Dorsolateral prefrontal cortex (tissue), 120 donors: ENCODE measurements at regions of chr1 and their contacts with region 1.

Region 1: DNA sequence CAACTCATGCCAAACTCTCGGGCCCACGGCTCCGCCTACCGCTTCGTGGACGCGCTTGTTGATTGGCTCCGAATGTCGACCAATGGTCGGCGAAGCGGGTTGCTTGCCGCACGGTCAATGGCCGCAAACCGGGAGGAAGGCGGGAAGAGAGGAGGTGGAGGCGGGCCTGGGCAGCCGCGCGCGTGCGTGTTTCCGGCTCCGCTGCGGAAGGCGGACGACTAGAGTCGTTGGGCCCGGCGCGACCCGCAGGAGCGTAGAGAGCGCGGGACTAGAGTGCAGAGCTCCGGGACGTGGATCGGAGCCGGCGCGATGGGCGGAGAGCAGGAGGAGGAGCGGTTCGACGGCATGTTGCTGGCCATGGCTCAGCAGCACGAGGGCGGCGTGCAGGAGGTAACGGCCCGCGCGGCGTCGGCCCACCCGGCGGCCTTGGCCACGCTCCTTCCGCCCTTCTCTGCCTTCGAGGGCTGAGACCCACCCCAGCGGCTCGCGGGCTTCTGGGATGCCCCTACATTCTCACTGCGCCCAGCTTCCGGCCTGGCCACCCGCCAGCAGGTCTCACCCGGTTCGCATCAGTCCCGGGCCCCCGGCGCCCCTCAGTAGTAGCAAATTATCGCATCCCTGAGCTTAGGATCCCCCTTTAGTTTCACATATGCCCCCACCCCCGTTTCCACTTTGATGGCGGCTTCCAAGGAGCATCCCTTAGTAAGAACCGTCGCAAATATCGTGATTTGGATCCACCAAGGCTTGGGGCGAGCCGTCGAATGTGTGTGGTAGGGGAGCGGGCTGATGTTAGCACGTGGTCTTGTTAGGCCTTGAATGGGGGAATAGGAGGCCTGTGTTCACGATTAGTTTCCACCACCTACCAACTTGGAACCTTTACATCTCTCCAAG is at the start of gene NUDC:
- DNase-seq: peak; percentile 97 to 99 (median 98)
- H3K4me3 ChIP-seq: peak within 1 kb of the TSS; percentile 68 to 100 (median 98)
- H3K27ac ChIP-seq: peak within 1 kb of the TSS; percentile 76 to 100 (median 97)
- H3K27me3 ChIP-seq: no peaks in the 10 kb centered on the region
- CTCF ChIP-seq: peak in 19 of 56 donors; percentile 9 to 49 (median 27)
- total RNA-seq, gene NUDC: 61.0 to 142 (median 91.8) TPM

Region 2: DNA sequence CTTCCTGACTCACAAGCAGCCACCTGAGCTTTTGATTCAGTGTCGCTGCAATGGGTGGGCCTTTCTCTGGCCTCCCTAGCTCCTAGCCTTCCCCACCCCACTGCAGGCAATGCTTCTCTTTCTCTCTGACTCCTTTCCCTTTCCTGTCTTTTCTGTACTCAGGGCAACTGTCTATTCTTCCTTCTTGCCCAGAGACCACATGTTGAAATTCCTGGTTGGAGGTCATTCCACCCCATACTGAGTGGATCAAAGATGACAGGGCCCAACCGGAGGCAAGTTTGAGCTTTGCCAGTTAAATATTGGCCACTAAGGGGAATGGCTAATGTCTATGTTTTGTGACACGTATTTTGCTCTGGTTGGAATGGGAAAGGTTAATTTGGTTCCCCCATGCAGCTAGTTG is 291.2 kb before region 1 on chr1:
- intact Hi-C with region 1: no loop called
- DNase-seq: no peak
- H3K4me3 ChIP-seq: no peak overlapping the region
- H3K27ac ChIP-seq: no peak overlapping the region
- H3K27me3 ChIP-seq: no peaks in the 10 kb centered on the region
- CTCF ChIP-seq: no peak

Region 3: GRCh38 chr1:26864610-26865527 is 56.9 kb before region 1 on chr1:
- intact Hi-C with region 1: loop called in 1 of 2 experiments (anchors 1 kb)
- DNase-seq: peak; percentile 92 to 98 (median 96)
- H3K4me3 ChIP-seq: peak overlapping the region; percentile 48 to 93 (median 76)
- H3K27ac ChIP-seq: peak overlapping the region; percentile 9 to 99 (median 90)
- H3K27me3 ChIP-seq: no peaks in the 10 kb centered on the region
- CTCF ChIP-seq: peak in 42 of 56 donors; percentile 9 to 64 (median 37)

Region 4: GRCh38 chr1:26874896-26875295 is 46.9 kb before region 1 on chr1:
- intact Hi-C with region 1: no loop called
- DNase-seq: no peak
- H3K4me3 ChIP-seq: no peak overlapping the region
- H3K27ac ChIP-seq: no peak overlapping the region
- H3K27me3 ChIP-seq: no peaks in the 10 kb centered on the region
- CTCF ChIP-seq: no peak

Region 5: DNA sequence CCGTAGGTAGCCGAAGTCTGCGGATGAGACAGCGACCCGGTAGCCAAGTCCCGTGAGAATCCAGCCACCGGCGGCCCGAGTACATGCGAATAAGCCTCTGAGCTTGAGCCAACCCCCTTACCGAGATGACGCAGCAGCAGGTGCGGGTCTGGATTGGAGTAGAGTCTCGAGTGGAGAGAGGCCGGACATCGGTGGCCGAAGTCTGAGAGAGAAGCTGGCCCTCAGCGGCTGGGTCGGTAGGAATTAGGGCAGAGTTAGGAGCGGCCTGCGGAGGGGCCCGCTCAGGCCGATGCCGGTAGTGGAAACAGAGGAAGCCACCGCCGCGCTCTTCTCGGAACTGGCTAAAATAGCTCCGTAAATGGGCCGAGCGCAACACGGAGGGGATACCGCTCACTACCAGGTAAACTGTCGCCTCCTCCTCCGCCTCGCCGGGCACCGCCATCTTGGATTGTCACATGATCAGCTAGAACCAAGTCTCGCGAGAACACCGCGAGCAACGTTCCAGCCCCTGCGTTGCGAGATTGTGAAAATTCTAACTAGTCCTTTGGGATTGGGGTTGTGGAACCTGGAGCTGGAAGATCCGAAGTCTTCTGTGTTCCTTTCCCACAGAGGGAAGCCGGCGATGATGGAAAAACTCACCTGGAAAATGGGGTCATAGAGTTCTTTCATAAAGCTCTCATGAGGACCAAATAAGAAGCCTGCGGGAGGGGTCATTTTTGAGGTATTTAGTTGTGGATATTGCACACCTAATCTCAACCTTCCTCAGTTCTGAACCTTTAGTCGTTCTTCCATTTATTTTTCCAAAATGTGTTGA is 21.6 kb before region 1 on chr1 and contains the start of gene GPATCH3:
- intact Hi-C with region 1: loop called (anchors 1 to 2 kb)
- DNase-seq: peak; percentile 79 to 92 (median 89)
- H3K4me3 ChIP-seq: peak within 1 kb of the TSS; percentile 66 to 100 (median 91)
- H3K27ac ChIP-seq: peak within 1 kb of the TSS; percentile 35 to 96 (median 88)
- H3K27me3 ChIP-seq: no peaks in the 10 kb centered on the region
- CTCF ChIP-seq: peak in 23 of 56 donors; percentile 3 to 44 (median 18)
- total RNA-seq, gene GPATCH3: 11.2 to 24.9 (median 16.6) TPM

Region 6: GRCh38 chr1:26959722-26960615 is 38.2 kb after region 1 on chr1 and contains the start of gene KDF1:
- intact Hi-C with region 1: no loop called
- DNase-seq: peak in 1 of 10 donors; percentile 58
- H3K4me3 ChIP-seq: peak within 1 kb of the TSS in 57 of 59 donors; percentile 6 to 62 (median 46)
- H3K27ac ChIP-seq: peak within 1 kb of the TSS in 26 of 59 donors; percentile 1 to 73 (median 36)
- H3K27me3 ChIP-seq: peaks cover 0 to 56% (median 29%) of the 10 kb centered on the region in 45 donors
- CTCF ChIP-seq: no peak
- total RNA-seq, gene KDF1: 0.27 to 3.7 (median 1.1) TPM in 113 of 120 experiments, not detected in the others

Region 7: DNA sequence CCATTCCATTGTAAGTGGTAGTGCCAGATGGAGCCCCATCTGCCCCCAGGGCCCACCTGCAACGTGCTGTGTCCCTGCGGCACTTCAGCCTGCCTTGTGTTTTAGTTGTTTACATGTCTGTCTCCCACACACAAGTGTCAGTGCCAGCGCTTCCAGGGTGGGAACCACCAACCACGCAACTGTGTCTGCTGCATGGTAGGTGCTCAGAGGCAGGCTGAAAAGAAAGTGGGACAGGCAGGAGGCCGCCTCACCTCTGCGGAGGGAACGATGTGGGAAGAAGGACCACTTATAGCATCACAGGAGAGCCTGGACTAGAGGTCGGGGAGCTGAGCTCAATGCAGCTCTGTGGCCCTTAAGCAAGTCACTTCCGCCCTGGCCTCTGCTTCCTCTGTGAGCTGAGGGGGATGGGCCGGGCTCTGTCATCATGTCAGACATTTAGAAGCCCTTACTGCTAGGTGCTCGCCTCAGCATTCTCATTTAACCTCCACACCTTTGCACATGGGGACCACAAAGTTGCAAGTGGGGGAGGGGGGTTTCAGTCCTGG is 215.3 kb after region 1 on chr1:
- intact Hi-C with region 1: no loop called
- DNase-seq: peak in 8 of 10 donors; percentile 50 to 78 (median 63)
- H3K4me3 ChIP-seq: peak overlapping the region in 1 of 59 donors; percentile 5
- H3K27ac ChIP-seq: peak overlapping the region in 56 of 59 donors; percentile 8 to 87 (median 71)
- H3K27me3 ChIP-seq: no peaks in the 10 kb centered on the region
- CTCF ChIP-seq: no peak